Posterior vena cava (tissue), 2 donors: ENCODE measurements at regions of chr7 and their contacts with region 1.

Region 1: DNA sequence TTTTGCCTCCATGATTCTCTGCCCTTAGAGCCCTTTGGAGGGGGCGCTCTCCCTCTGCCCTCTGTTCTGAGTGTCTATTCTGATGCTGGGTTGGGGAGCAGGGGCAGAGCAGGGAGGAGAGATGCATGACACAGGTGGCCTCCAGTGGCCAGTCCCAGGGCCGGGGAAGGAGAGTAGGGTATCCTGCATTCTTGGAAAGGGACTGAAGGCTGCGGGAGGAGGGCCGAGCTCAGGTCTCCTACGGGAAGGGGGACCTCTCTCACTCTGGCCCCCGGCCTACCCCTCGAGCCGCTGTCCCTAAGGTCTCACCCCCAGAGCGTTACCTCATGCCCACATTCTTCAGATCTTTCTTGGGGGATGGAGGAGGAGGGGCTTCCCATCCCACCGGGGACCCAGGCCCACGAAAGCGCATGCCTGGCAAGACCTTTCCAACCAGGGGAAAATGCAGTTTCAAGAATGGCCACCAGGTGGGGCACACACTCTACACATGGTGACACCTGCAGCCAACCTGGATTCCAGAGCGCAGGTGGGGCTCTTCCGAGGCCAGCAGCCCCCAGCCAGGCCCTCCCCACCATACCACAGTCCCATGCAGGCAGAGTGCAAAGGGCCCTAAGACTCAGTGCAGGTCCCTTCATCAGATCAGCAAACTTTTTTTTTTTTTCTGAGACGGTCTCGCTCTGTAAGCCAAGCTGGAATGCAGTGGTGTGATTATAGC is 86.4 kb downstream of the MYL10 start:
- DNase-seq: no peak

Region 2: GRCh38 chr7:101363734-101364374 is 178.8 kb before region 1 on chr7:
- intact Hi-C with region 1: loop called (anchors 10 kb)
- DNase-seq: peak; percentile 90

Region 3: DNA sequence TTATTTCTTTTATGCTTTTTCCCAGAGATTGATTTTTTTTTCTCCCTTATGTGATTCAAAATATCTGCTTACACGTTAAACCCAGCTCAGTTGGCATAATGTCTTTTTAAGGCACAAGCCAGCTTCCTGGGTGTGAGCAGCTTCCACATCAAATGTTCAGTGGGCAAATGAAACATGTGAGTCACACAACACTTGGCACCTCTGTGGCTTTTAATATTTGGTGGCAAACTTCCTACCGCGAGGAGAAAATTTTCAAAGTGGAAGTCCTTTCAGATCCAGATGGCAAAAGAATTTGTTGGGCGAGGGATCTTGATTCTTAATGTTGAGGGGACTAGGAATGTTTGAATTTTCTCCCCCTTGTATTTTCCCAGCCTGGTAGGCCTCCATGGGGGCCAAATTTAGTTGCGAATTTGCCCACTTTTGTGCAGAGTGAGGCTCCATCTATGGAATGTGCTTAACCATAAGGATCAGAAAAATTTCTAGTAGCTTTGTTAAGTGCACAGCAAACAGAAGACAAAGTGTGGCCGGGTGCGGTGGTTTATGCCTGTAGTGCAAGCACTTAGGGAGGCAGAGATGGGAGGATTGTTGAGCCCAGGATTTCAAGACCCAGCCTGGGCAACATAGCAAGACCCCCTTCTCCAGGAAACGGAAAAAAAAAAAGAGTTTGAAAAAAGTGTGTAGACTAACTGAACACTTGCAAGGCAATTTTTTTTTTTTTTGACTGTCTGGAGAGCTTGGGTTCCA is 305.7 kb after region 1 on chr7:
- intact Hi-C with region 1: no loop called
- DNase-seq: no peak

Region 4: DNA sequence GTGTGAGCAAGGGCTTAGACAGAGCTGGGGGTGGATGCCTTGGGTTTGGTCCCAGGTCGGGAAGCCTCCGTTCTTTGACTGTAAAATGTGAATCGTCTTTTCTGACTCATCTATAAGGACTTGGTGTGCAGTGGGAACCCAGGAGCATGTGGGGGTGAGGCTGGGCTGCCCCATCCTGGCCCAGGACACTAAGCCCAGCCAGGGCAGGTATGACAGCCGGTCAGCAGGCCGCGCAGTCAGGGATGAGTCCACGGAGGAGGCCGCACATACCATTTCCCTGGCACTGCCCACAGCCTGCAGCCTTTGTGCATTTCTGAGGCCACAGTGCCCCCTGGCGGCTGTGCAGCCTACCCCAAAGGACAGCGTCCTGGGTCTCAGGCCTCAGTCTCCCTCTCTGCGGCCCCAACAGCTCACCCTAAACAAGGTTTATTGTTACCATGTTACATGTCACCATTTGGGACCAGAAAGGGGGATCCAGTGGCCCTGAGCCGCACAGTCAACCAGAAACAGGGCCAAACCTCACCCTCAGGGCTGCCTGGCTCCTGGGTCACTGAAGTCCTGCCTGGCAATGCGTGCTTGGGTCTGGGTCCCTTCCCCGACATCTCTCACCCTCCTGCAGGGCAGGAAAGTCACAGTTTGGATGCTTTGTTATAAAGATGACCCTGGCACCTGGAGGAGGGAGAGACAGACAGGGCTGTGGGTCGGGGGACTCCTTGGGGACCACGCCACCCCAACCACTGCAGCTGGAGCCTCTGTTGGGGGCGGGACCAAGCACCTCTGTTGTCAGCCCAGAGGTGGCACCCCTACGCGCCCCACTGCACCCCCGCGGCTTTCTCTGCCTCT is 729.6 kb after region 1 on chr7:
- intact Hi-C with region 1: loop called (anchors 5 kb)
- DNase-seq: peak; percentile 92